ENCODE measurements at regions of chr13 and their contacts with region 1.

Region 1: GRCh38 chr13:98576963-98577822 is at the start of gene STK24:
- DNase-seq: no peak
- H3K4me3 ChIP-seq: peak within 1 kb of the TSS; percentile 75 to 99 (median 88)
- H3K27ac ChIP-seq: peak within 1 kb of the TSS; percentile 90 to 99 (median 99)
- H3K4me1 ChIP-seq: peaks cover 42 to 61% (median 50%) of the 10 kb centered on the region in 4 donors
- H3K27me3 ChIP-seq: no peaks in the 10 kb centered on the region
- CTCF ChIP-seq: no peak
- EP300 ChIP-seq: no peak
- POLR2A ChIP-seq: no peak
- total RNA-seq, gene STK24: 61.9 to 108 (median 96.7) TPM

Region 2: GRCh38 chr13:97639236-97639635 is 938.0 kb before region 1 on chr13:
- intact Hi-C with region 1: no loop called
- DNase-seq: no peak
- H3K4me3 ChIP-seq: no peak overlapping the region
- H3K27ac ChIP-seq: no peak overlapping the region
- H3K4me1 ChIP-seq: no peaks in the 10 kb centered on the region
- H3K27me3 ChIP-seq: no peaks in the 10 kb centered on the region
- CTCF ChIP-seq: no peak
- EP300 ChIP-seq: no peak
- POLR2A ChIP-seq: no peak

Region 3: GRCh38 chr13:98451676-98452470 is 125.3 kb before region 1 on chr13:
- intact Hi-C with region 1: loop called (anchors 2 kb)
- DNase-seq: no peak
- H3K4me3 ChIP-seq: no peak overlapping the region
- H3K27ac ChIP-seq: peak overlapping the region; percentile 39 to 79 (median 78)
- H3K4me1 ChIP-seq: peaks cover 66 to 87% (median 78%) of the 10 kb centered on the region in 4 donors
- H3K27me3 ChIP-seq: no peaks in the 10 kb centered on the region
- CTCF ChIP-seq: no peak
- EP300 ChIP-seq: no peak
- POLR2A ChIP-seq: no peak

Region 4: GRCh38 chr13:98495627-98496478 is 81.3 kb before region 1 on chr13:
- intact Hi-C with region 1: loop called (anchors 5 kb)
- DNase-seq: no peak
- H3K4me3 ChIP-seq: peak overlapping the region; percentile 0 to 32 (median 14)
- H3K27ac ChIP-seq: peak overlapping the region; percentile 68 to 79 (median 72)
- H3K4me1 ChIP-seq: peaks cover 28 to 87% (median 82%) of the 10 kb centered on the region in 4 donors
- H3K27me3 ChIP-seq: no peaks in the 10 kb centered on the region
- CTCF ChIP-seq: no peak
- EP300 ChIP-seq: no peak
- POLR2A ChIP-seq: no peak

Region 5: GRCh38 chr13:98653463-98653985 is 76.3 kb after region 1 on chr13:
- intact Hi-C with region 1: loop called (anchors 5 kb)
- DNase-seq: no peak
- H3K4me3 ChIP-seq: no peak overlapping the region
- H3K27ac ChIP-seq: no peak overlapping the region
- H3K4me1 ChIP-seq: peaks cover 2 to 8% (median 7%) of the 10 kb centered on the region in 4 donors
- H3K27me3 ChIP-seq: no peaks in the 10 kb centered on the region
- CTCF ChIP-seq: peak; percentile 88 to 94 (median 91)
- EP300 ChIP-seq: no peak
- POLR2A ChIP-seq: no peak